ENCODE measurements at regions of chr3 and their contacts with region 1.

Region 1: GRCh38 chr3:149771652-149772271 is 19.5 kb upstream of the COMMD2 start:
- DNase-seq: peak; percentile 33 to 65 (median 57)
- H3K4me3 ChIP-seq: no peak overlapping the region
- H3K27ac ChIP-seq: no peak overlapping the region
- H3K4me1 ChIP-seq: no peaks in the 10 kb centered on the region
- H3K27me3 ChIP-seq: no peaks in the 10 kb centered on the region
- CTCF ChIP-seq: peak; percentile 45 to 79 (median 74)
- POLR2A ChIP-seq: no peak

Region 2: DNA sequence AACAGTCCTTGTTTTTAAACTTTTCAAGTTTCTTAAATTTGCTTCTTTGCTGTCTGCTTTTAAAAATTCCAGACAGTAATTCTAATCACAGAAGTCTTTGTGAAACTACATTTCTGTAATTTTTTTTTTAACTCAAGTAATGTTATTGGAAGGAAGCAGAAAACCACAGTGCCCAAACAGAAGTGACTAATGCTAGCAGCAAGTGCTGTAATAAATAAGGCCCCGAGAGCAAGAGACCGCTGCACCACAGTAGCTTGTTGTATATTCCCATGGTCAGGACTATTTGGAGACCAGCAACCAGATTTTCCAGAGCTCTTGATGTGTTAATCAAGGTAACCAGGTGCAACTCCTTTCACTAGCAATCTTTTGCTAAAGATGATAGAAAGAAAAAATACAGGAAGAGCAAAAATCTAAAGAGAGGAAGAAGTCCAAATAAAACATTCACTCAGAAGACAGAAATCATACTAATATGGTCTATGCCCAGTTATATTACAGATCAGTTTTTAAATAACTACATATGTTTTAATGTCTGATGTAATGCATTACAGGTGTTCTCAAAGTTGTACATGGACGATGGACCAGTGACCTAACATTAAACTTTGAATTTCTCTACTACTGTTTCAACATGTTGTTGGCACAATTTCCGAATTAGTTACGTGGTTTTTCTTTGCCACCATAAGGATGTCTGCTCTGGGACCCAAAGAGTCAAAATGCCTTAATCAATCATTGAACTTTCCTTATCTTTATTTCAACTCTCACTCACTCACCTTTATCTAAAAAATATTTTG is 150.3 kb before region 1 on chr3:
- intact Hi-C with region 1: no loop called
- DNase-seq: no peak
- H3K4me3 ChIP-seq: no peak overlapping the region
- H3K27ac ChIP-seq: no peak overlapping the region
- H3K4me1 ChIP-seq: peaks cover 0 to 31% of the 10 kb centered on the region in 2 donors
- H3K27me3 ChIP-seq: no peaks in the 10 kb centered on the region
- CTCF ChIP-seq: no peak
- POLR2A ChIP-seq: no peak

Region 3: GRCh38 chr3:149808209-149808829 is 36.6 kb after region 1 on chr3:
- intact Hi-C with region 1: loop called in 1 of 2 experiments (anchors 5 kb)
- DNase-seq: peak; percentile 69 to 89 (median 76)
- H3K4me3 ChIP-seq: no peak overlapping the region
- H3K27ac ChIP-seq: no peak overlapping the region
- H3K4me1 ChIP-seq: peaks cover 0 to 10% of the 10 kb centered on the region in 2 donors
- H3K27me3 ChIP-seq: no peaks in the 10 kb centered on the region
- CTCF ChIP-seq: peak; percentile 69 to 90 (median 74)
- POLR2A ChIP-seq: no peak

Region 4: DNA sequence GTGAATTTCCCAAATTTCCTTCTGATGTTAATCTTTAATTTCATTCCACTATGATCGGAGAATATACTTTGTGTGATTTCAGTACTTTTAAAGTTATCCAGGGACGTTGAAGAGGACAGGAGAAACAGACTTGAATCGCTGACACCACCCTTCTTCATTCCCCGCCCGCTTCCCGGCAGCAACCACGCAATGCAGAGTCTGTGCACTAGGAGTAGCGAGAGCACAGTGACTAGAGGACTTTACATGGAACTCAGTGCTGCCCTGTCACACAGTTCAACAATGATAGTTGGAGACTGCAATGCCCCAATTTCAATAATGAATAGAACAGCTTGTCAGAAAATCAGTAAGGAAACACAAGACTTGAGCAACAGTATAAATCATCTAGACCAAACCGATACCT is 115.2 kb after region 1 on chr3:
- intact Hi-C with region 1: no loop called
- DNase-seq: no peak
- H3K4me3 ChIP-seq: no peak overlapping the region
- H3K27ac ChIP-seq: no peak overlapping the region
- H3K4me1 ChIP-seq: no peaks in the 10 kb centered on the region
- H3K27me3 ChIP-seq: no peaks in the 10 kb centered on the region
- CTCF ChIP-seq: no peak
- POLR2A ChIP-seq: no peak

Measured in adrenal gland (tissue), 19 donors.